ENCODE measurements at regions of chr5 and their contacts with region 1.

Region 1: DNA sequence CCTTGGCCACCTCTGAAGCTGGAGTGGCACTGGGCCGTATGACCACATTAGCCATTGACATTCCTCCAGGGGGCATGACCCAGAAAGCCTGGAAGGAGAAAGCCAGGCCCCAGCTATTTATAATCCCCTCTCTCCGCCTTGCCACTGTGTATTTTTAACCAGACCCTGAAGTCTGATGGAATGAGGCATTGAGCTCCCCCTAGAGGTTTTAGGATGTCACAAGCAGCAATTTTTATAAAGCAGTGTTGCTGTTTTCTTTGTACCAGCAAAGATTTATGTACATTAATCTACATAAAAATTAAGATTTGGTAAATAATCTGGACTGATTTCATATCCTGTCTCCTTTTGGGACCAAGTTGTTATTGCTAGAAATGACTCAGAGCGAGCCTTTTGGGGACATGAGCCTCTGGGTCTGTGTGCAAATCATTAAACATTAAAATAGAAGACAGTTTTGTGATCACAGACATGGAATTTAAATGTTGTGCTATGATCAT is 127.1 kb downstream of the TRIO start:
- H3K4me3 ChIP-seq: no peak overlapping the region
- H3K27ac ChIP-seq: no peak overlapping the region
- H3K4me1 ChIP-seq: peaks cover 48% of the 10 kb centered on the region
- CTCF ChIP-seq: no peak

Region 2: DNA sequence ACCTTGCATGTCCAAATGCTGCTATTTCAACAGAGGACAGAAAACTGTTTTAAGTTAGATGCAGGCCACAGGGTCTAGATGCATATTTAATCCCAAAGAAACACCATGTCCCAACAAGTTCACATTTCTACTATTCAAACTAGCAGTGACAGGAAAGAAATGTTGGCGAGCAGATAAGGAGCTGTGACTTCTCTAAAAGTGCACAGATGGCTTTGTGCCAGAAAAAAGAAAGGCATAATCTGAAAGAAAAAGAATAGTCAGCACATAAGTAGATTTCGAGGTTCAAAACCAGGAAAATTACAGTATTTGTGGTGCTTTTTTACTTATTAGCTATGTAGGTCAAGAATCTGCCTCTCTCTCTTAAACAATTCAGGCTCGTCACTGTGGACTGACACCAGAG is 504.0 kb before region 1 on chr5:
- CTCF ChIA-PET with region 1: no interaction called
- POLR2A ChIA-PET with region 1: no interaction called
- H3K4me3 ChIP-seq: no peak overlapping the region
- H3K27ac ChIP-seq: no peak overlapping the region
- H3K4me1 ChIP-seq: no peaks in the 10 kb centered on the region
- CTCF ChIP-seq: no peak

Region 3: DNA sequence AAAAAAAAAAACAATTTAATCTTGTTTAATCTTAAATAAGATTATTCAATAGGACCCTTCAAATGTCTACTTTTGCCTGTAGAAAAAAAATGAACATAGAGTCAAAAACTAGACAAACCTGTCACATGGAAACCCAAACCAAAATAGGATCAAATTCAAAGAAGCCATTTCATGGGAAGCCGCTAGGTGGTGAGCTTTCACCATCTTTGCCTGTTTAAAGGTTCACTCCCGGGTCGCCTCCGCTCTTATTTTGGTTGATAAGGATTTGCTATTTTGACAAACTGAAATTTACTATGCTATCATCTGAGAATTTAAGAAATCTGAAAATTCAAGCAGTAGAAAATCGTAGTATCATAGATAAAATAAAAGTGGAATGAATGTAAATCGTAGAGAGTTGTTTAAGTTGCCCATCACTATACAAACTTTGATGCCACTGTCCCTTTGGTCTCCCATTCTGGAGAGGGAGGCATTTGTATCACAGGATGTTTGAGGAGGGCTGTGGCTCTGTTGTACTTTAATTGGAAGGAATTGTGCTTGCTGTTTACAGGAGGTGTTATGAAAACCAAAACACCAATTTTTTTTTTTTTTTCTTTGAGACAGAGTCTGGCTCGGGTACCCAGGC is 282.3 kb before region 1 on chr5:
- CTCF ChIA-PET with region 1: interaction called, 28 read pairs
- POLR2A ChIA-PET with region 1: no interaction called
- H3K4me3 ChIP-seq: no peak overlapping the region
- H3K27ac ChIP-seq: no peak overlapping the region
- H3K4me1 ChIP-seq: no peaks in the 10 kb centered on the region
- CTCF ChIP-seq: peak; percentile 72; the same call in 1 of the 2 replicates

Region 4: DNA sequence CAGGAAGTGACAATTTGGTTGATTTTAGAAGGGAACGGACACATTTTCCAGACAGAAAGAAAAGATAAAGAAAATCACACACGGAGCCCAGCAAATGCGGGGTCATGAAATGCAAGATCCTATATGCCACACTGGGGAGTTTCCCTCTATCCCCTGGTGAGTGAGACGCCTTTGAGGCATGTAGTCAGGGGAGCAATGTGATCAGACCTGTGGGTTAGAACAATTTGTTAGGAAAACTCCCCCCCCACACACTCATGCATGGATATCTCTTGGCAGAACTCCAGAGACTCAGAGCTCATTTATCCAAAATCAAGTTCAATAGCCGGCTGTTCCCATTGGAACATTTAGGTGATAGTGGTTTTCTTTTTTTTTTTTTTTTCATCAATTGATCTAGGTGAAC is 198.8 kb before region 1 on chr5:
- CTCF ChIA-PET with region 1: no interaction called
- POLR2A ChIA-PET with region 1: no interaction called
- H3K4me3 ChIP-seq: no peak overlapping the region
- H3K27ac ChIP-seq: no peak overlapping the region
- H3K4me1 ChIP-seq: no peaks in the 10 kb centered on the region
- CTCF ChIP-seq: no peak

Region 5: GRCh38 chr5:14165375-14166091 is 104.7 kb before region 1 on chr5:
- CTCF ChIA-PET with region 1: interaction called, 13 read pairs
- POLR2A ChIA-PET with region 1: interaction called, 4 read pairs
- H3K4me3 ChIP-seq: no peak overlapping the region
- H3K27ac ChIP-seq: peak overlapping the region; percentile 38; the same call in 1 of the 2 replicates
- H3K4me1 ChIP-seq: peaks cover 52% of the 10 kb centered on the region
- CTCF ChIP-seq: no peak

Region 6: GRCh38 chr5:14245132-14245925 is 24.9 kb before region 1 on chr5:
- CTCF ChIA-PET with region 1: interaction called, 10 read pairs
- POLR2A ChIA-PET with region 1: no interaction called
- H3K4me3 ChIP-seq: no peak overlapping the region
- H3K27ac ChIP-seq: no peak overlapping the region
- H3K4me1 ChIP-seq: peaks cover 20% of the 10 kb centered on the region
- CTCF ChIP-seq: no peak

Region 7: GRCh38 chr5:14286574-14287421 is 16.5 kb after region 1 on chr5:
- CTCF ChIA-PET with region 1: interaction called, 28 read pairs
- POLR2A ChIA-PET with region 1: no interaction called
- H3K4me3 ChIP-seq: no peak overlapping the region
- H3K27ac ChIP-seq: no peak overlapping the region
- H3K4me1 ChIP-seq: no peaks in the 10 kb centered on the region
- CTCF ChIP-seq: no peak

Measured in HEK293 (cell line).